ENCODE measurements at regions of chr6 and their contacts with region 1.

Region 1: DNA sequence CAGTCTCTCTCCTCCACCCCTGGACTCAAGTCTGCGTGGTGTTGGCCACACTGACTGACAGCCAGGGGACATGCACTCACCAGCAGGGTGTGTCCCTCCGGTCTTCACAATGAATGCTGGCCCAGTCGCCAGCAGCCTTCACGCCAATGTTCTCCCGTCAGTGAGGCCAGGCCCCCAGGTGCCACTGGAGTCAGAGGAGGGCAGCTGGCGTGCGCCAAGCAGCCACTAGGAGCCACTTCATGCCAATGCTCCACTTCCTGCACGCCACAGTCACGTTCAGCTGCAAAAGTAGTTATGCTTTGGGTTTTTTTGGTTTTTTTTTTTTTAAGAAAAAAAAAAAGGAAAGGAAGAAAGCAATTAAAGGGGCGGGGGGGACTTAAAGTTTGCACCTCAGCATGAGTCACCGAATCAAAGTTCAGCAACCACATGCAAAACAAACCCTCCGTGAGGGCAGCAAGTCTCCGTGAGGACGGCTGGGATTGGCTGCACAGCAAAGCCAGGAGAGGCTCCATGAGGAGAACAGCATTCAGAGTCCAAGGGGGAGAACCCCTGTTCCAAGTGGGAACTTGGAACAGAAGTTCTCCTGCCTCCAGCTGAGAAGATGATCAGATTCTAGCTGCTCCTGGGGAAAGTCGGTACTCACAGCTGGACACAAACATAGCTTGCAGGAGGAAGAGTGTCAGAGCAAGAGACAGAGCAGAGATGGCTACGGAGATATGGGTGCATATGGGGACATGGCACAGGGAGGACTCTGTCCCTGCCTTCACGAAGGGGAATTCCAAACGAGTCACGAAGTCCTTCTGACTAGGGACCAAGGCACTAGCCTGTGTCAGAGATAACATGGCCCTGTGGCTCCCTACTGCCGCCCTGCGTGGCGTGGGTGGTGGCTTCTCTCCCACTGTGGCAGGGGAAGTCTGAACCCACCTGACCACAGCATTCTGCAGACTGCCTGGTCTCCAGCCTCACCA is at the start of gene ZC3H12D:
- DNase-seq: peak; percentile 92
- ATAC-seq: peak; percentile 77
- H3K4me3 Mint-ChIP-seq: peak within 1 kb of the TSS; percentile 85
- H3K27ac Mint-ChIP-seq: peak within 1 kb of the TSS; percentile 99
- H3K4me1 Mint-ChIP-seq: peaks cover 74% of the 10 kb centered on the region
- H3K27me3 Mint-ChIP-seq: no peaks in the 10 kb centered on the region
- CTCF ChIP-seq: peak; percentile 39
- total RNA-seq, gene ZC3H12D: 37.7 to 39.0 TPM

Region 2: GRCh38 chr6:149473080-149474052 is 11.7 kb before region 1 on chr6:
- CTCF ChIA-PET with region 1: interaction called, 3 read pairs
- POLR2A ChIA-PET with region 1: interaction called, 11 read pairs
- intact Hi-C with region 1: no loop called
- DNase-seq: no peak
- ATAC-seq: no peak
- H3K4me3 Mint-ChIP-seq: no peak overlapping the region
- H3K27ac Mint-ChIP-seq: no peak overlapping the region
- H3K4me1 Mint-ChIP-seq: peaks cover 47% of the 10 kb centered on the region
- H3K27me3 Mint-ChIP-seq: no peaks in the 10 kb centered on the region
- CTCF ChIP-seq: no peak

Region 3: DNA sequence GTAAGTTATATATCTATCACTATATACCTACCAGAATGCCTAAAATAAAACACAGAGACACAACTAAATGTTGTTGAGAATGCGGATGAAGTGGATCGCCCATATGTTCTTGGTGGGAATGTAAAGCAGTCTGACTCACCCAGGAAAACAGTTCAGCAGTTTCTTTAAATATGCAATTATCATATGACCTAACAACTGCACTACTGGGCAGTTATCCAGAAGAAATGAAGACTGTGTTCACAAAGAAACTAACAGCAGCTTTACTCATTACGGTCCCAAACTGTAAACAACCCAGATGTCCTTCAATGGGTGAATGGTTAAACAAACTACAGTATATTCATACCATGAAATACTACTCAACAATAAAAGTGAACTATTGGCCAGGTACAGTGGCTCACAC is 14.0 kb after region 1 on chr6:
- CTCF ChIA-PET with region 1: interaction called, 32 read pairs
- POLR2A ChIA-PET with region 1: interaction called, 22 read pairs
- intact Hi-C with region 1: no loop called
- DNase-seq: no peak
- ATAC-seq: no peak
- H3K4me3 Mint-ChIP-seq: no peak overlapping the region
- H3K27ac Mint-ChIP-seq: peak overlapping the region; percentile 82
- H3K4me1 Mint-ChIP-seq: peaks cover 76% of the 10 kb centered on the region
- H3K27me3 Mint-ChIP-seq: no peaks in the 10 kb centered on the region
- CTCF ChIP-seq: no peak

Region 4: DNA sequence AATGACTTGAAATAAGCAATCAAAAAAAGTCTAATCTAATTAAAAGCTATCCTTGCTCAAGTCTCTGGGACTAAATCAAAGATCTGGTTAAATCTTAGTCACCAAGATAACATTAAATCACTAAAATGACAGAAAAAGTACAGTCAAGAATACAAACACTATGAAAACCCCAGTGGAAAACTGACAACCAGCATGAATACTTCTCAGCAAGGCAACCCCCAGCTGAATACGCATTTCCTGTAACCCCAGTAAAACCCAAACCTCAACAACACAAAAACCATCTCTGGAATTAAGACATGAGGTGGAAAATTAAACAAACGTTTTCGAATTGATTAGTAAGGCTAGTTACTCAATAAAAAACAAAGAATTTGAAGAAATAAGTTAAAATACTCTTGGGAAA is 23.5 kb after region 1 on chr6:
- CTCF ChIA-PET with region 1: interaction called, 32 read pairs
- POLR2A ChIA-PET with region 1: interaction called, 22 read pairs
- intact Hi-C with region 1: loop called (anchors 2 kb)
- DNase-seq: peak; percentile 53
- ATAC-seq: peak; percentile 83
- H3K4me3 Mint-ChIP-seq: peak overlapping the region; percentile 42
- H3K27ac Mint-ChIP-seq: peak overlapping the region; percentile 99
- H3K4me1 Mint-ChIP-seq: peaks cover 52% of the 10 kb centered on the region
- H3K27me3 Mint-ChIP-seq: no peaks in the 10 kb centered on the region
- CTCF ChIP-seq: no peak

Region 5: GRCh38 chr6:149551920-149552319 is 66.9 kb after region 1 on chr6:
- CTCF ChIA-PET with region 1: no interaction called
- POLR2A ChIA-PET with region 1: no interaction called
- intact Hi-C with region 1: no loop called
- DNase-seq: no peak
- ATAC-seq: no peak
- H3K4me3 Mint-ChIP-seq: no peak overlapping the region
- H3K27ac Mint-ChIP-seq: no peak overlapping the region
- H3K4me1 Mint-ChIP-seq: peaks cover 3% of the 10 kb centered on the region
- H3K27me3 Mint-ChIP-seq: peaks cover 1% of the 10 kb centered on the region
- CTCF ChIP-seq: no peak

Measured in activated CD8-positive, alpha-beta T cell treated with anti-CD3 and anti-CD28 coated beads for 36 hours (primary cell).